ENCODE measurements at regions of chr7 and their contacts with region 1.

Region 1: GRCh38 chr7:43582503-43583423 is at the start of gene STK17A:
- DNase-seq: peak; percentile 94
- CTCF ChIP-seq: peak; percentile 99

Region 2: DNA sequence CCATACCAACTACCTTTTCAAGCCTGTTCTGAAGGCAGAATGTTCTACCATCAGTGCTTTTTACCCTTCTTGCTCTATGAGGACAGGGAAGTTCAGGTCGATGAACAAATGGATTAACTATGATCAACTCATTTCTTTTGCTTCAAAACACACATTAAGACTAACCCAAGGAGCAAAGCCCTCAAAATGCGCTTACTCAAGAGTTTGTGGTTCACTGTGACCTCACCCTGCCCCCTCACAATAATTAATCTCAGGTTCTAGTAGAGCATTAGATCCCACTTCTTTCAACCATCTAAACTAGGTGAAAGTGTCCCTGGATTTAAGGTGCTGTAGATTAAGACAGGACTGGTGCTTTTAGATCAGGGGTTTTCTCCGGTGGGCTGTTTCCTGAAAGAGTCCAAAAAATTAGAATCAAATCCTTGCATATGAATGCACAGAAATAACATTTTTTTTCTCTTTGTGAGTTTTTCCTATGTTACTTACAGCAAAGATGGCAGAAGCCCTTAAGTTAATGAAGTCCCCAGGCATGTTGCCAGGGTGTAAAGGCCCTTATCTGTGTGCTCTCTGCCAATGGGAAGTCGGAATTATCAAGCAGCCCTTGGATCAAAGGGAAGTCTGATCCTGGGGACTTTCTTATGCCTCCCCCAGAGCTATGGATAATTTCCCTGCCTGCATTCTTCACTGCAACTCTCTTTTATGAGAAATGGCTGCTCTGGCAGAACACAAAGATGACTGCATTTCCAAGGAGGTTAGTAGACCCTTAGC is 205.4 kb before region 1 on chr7:
- CTCF ChIA-PET with region 1: no interaction called
- POLR2A ChIA-PET with region 1: no interaction called
- DNase-seq: no peak
- CTCF ChIP-seq: no peak

Region 3: GRCh38 chr7:43572516-43573049 is 10.2 kb before region 1 on chr7:
- CTCF ChIA-PET with region 1: interaction called, 154 read pairs
- POLR2A ChIA-PET with region 1: interaction called, 12 read pairs
- DNase-seq: no peak
- CTCF ChIP-seq: no peak

Region 4: GRCh38 chr7:43631559-43631958 is 48.8 kb after region 1 on chr7:
- CTCF ChIA-PET with region 1: interaction called, 10 read pairs
- POLR2A ChIA-PET with region 1: interaction called, 7 read pairs
- DNase-seq: no peak
- CTCF ChIP-seq: no peak

Region 5: GRCh38 chr7:43679210-43680068 is 96.7 kb after region 1 on chr7:
- CTCF ChIA-PET with region 1: interaction called, 13 read pairs
- POLR2A ChIA-PET with region 1: interaction called, 4 read pairs
- DNase-seq: peak; percentile 35
- CTCF ChIP-seq: no peak

Region 6: GRCh38 chr7:43721193-43721806 is 138.5 kb after region 1 on chr7:
- CTCF ChIA-PET with region 1: interaction called, 124 read pairs
- POLR2A ChIA-PET with region 1: interaction called, 12 read pairs
- DNase-seq: no peak
- CTCF ChIP-seq: peak; percentile 48

Region 7: GRCh38 chr7:43758029-43758821 is 175.5 kb after region 1 on chr7 and contains the start of gene BLVRA:
- CTCF ChIA-PET with region 1: interaction called, 35 read pairs
- POLR2A ChIA-PET with region 1: interaction called, 6 read pairs
- DNase-seq: peak; percentile 90
- CTCF ChIP-seq: no peak

Region 8: DNA sequence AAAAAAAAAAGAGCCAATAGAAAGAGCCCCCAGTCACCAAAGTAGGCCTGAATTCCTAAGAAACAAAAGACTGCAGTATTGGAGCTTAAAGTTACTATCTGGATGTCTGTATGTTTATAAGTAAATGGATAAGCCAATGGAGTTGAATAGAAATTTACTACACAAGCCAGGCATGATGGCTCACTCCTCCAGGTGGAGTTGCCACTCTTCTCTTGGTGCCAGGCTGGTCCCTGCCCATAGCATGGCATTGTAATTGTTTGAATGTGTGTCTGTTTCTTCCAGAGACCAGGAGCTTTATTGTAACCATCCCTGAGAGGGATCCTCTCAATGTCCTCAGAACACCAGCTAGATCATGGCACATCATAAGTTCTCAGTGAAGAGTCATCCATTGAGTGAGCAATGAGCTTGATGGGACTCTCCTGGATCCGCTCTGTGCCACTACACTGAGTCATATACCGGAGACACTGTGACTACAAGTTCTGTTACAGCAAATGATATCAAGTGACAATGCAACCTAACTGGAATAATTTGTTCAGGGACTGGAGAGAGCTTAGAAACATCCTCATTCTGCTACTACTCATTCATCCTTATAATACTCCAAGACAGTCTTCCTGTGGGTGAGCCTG is 261.4 kb after region 1 on chr7:
- CTCF ChIA-PET with region 1: interaction called, 114 read pairs
- POLR2A ChIA-PET with region 1: no interaction called
- DNase-seq: no peak
- CTCF ChIP-seq: no peak